Naive thymus-derived CD8-positive, alpha-beta T cell (primary cell): ENCODE measurements at regions of chr18 and their contacts with region 1.

Region 1: DNA sequence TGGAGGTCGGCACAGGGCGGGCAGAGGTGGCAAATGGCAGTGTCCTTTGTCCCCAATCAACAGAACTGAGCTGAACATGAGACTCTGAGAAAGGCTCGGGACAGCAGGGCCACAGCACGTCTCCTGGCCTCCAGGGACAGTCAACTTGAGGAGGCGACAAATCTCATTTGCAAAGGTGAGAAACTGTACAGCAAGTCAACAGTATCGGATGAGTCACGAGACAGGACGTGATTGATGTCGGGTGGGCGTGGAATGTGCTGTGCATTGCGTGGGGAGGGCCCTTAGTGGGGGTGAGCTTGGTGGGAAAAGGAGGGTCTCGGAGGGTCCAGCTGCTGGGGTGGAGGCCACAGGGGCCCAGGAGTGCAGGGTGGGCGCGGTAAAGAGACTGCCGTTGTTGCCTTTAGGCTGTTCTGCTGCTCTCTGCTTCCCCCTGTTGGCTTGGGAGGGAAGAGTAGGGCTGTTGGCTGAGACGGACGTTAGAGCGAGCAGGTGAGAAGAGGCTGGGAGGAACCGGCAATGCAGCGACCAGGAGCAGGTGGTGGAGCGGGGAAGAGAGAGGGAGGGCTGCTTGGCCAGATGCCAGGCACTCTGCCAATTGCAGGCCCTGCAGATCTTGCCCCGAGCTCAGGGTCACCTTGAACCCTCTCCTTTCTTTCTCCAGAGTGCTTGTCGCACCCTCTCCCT is 164.3 kb downstream of the BCL2 start:
- DNase-seq: peak; percentile 58 to 90 (median 78)
- ATAC-seq: peak; percentile 74 to 77
- H3K4me3 Mint-ChIP-seq: peak overlapping the region; percentile 75 to 94 (median 86)
- H3K27ac Mint-ChIP-seq: peak overlapping the region; percentile 94 to 100 (median 98)
- H3K4me1 Mint-ChIP-seq: peaks cover 61 to 100% (median 97%) of the 10 kb centered on the region in 4 donors
- H3K27me3 Mint-ChIP-seq: no peaks in the 10 kb centered on the region

Region 2: DNA sequence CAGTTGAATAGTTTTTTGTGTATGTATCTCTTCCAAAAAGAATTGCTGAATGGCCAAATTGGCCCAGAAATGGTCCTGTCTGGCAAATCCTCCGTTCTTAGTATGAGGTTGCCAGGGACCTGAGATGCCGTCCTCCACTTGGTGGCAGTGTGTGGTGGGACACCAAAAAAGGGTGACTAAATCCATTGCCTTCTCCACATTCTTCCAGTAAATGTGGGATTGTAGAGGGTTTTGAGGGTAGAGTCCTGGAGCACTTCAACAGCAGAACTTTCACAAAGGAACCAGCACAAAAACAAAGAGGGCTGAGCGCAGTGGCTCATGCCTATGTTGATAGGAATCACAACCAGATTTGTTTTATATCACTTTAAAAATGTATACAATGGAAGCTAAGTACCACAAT is 35.7 kb before region 1 on chr18:
- POLR2A ChIA-PET with region 1: no interaction called
- DNase-seq: no peak
- ATAC-seq: no peak
- H3K4me3 Mint-ChIP-seq: no peak overlapping the region
- H3K27ac Mint-ChIP-seq: peak overlapping the region in 1 of 10 donors; percentile 61
- H3K4me1 Mint-ChIP-seq: peaks cover 0 to 9% (median 6%) of the 10 kb centered on the region in 4 donors
- H3K27me3 Mint-ChIP-seq: no peaks in the 10 kb centered on the region

Region 3: GRCh38 chr18:63138436-63139340 is 16.6 kb before region 1 on chr18:
- POLR2A ChIA-PET with region 1: interaction called, 12 read pairs
- DNase-seq: no peak
- ATAC-seq: peak; percentile 18 to 38
- H3K4me3 Mint-ChIP-seq: peak overlapping the region; percentile 75 to 94 (median 86)
- H3K27ac Mint-ChIP-seq: peak overlapping the region; percentile 68 to 97 (median 92)
- H3K4me1 Mint-ChIP-seq: peaks cover 47 to 83% (median 69%) of the 10 kb centered on the region in 4 donors
- H3K27me3 Mint-ChIP-seq: no peaks in the 10 kb centered on the region

Region 4: GRCh38 chr18:63299837-63300745 is 144.8 kb after region 1 on chr18:
- POLR2A ChIA-PET with region 1: interaction called, 10 read pairs
- DNase-seq: no peak
- ATAC-seq: peak; percentile 57 to 72
- H3K4me3 Mint-ChIP-seq: peak overlapping the region; percentile 43 to 75 (median 64)
- H3K27ac Mint-ChIP-seq: peak overlapping the region; percentile 53 to 96 (median 91)
- H3K4me1 Mint-ChIP-seq: peaks cover 39 to 84% (median 80%) of the 10 kb centered on the region in 4 donors
- H3K27me3 Mint-ChIP-seq: no peaks in the 10 kb centered on the region